Heart left ventricle (tissue), 16 donors: ENCODE measurements at regions of chr11 and their contacts with region 1.

Region 1: GRCh38 chr11:117851106-117851505 is 25.4 kb downstream of the FXYD6 start:
- DNase-seq: peak in 1 of 5 donors; percentile 5
- ATAC-seq: peak in 3 of 4 donors; percentile 63 to 80 (median 78)
- H3K4me3 ChIP-seq: no peak overlapping the region
- H3K27ac ChIP-seq: peak overlapping the region in 9 of 12 donors; percentile 4 to 73 (median 23)
- H3K4me1 ChIP-seq: peaks cover 0 to 40% (median 17%) of the 10 kb centered on the region in 12 donors
- H3K27me3 ChIP-seq: no peaks in the 10 kb centered on the region
- CTCF ChIP-seq: no peak
- POLR2A ChIP-seq: no peak

Region 2: GRCh38 chr11:117885777-117886176 is 34.7 kb after region 1 on chr11:
- intact Hi-C with region 1: loop called in 3 of 10 experiments (anchors 5 kb)
- DNase-seq: peak; percentile 83 to 88 (median 87)
- ATAC-seq: peak; percentile 81 to 95 (median 92)
- H3K4me3 ChIP-seq: peak overlapping the region in 11 of 12 donors; percentile 10 to 56 (median 37)
- H3K27ac ChIP-seq: peak overlapping the region; percentile 18 to 92 (median 77)
- H3K4me1 ChIP-seq: peaks cover 0 to 31% (median 15%) of the 10 kb centered on the region in 12 donors
- H3K27me3 ChIP-seq: no peaks in the 10 kb centered on the region
- CTCF ChIP-seq: no peak
- POLR2A ChIP-seq: peak in 1 of 2 donors; percentile 48

Region 3: GRCh38 chr11:117891362-117891761 is 40.3 kb after region 1 on chr11:
- intact Hi-C with region 1: loop called in 3 of 10 experiments (anchors 2 to 5 kb)
- DNase-seq: no peak
- ATAC-seq: no peak
- H3K4me3 ChIP-seq: no peak overlapping the region
- H3K27ac ChIP-seq: no peak overlapping the region
- H3K4me1 ChIP-seq: peaks cover 0 to 6% (median 2%) of the 10 kb centered on the region in 12 donors
- H3K27me3 ChIP-seq: no peaks in the 10 kb centered on the region
- CTCF ChIP-seq: no peak
- POLR2A ChIP-seq: no peak

Region 4: DNA sequence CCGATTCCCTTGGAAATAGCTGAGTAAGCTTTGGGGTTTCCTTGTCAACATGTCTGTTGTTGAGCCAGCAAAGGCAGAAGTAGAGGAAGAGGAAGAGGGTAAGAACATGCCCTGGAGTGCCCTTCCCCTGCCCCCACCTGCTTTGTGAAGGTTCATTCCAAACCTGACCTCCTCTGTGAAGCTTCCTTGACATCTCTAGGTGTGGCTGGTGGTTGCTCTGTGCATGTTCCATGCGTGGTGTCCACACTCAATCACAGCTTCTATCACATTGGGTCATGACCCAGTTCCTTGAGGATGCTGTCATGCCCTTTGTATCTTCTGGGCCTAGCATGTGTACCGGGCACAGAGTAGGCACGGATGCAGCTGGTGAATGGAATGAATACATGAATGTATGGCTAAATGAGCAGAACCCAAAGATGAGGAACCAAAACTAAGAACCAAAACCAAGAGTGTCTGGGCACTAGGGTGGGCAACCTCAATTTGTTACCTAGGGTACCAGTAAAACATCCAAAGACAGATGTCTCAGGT is 49.1 kb after region 1 on chr11:
- intact Hi-C with region 1: loop called in 1 of 10 experiments (anchors 2 kb)
- DNase-seq: peak in 1 of 5 donors; percentile 32
- ATAC-seq: peak; percentile 27 to 51 (median 40)
- H3K4me3 ChIP-seq: no peak overlapping the region
- H3K27ac ChIP-seq: peak overlapping the region in 1 of 12 donors; percentile 37
- H3K4me1 ChIP-seq: peaks cover 0 to 25% (median 0%) of the 10 kb centered on the region in 12 donors
- H3K27me3 ChIP-seq: no peaks in the 10 kb centered on the region
- CTCF ChIP-seq: no peak
- POLR2A ChIP-seq: no peak

Region 5: DNA sequence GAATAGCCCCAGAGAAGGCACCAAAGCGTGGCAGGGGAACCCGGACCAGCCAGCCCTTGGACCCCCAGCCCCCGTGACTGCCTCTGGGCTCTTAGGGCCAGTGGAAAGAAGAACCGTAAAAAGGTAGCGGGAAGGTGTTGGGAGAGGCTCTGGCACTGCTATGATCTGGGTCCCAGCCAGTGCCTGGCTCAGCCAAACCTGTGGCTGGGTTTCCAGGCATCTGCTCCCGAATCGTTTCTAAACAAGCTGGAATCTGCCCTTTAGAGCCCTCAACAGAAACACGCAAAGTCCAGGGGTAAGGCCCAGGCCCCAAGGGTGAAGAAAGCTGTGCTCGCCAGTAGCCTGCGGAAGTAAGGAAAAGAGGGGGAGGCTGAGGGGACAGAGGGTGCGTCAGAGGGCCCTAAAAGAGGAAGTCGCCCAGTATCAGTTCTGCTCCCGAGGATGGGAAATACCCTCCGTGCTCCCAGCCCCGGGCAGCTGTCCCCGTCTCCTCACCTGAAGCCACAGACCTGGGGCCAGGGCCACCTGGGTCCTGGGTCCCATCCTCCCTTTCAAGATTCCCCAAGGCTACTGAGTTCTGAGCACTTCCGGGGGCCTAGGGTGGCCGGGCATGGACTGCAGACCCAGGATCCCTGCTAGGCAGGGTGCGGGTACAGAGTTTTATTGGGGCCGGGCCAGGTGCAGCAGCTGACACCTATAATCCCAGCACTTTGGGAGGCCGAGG is 159.8 kb after region 1 on chr11:
- intact Hi-C with region 1: no loop called
- DNase-seq: peak; percentile 56 to 73 (median 64)
- ATAC-seq: peak; percentile 72 to 85 (median 80)
- H3K4me3 ChIP-seq: no peak overlapping the region
- H3K27ac ChIP-seq: peak overlapping the region in 9 of 12 donors; percentile 16 to 95 (median 54)
- H3K4me1 ChIP-seq: peaks cover 0 to 89% (median 0%) of the 10 kb centered on the region in 12 donors
- H3K27me3 ChIP-seq: no peaks in the 10 kb centered on the region
- CTCF ChIP-seq: no peak
- POLR2A ChIP-seq: no peak